Activated naive CD4-positive, alpha-beta T cell treated with anti-CD3 and anti-CD28 coated beads, Interleukin-2, amount 10 ng/mL, durations not matched to agents 7 days and 5 days (primary cell): ENCODE measurements at regions of chr20 and their contacts with region 1.

Region 1: GRCh38 chr20:53750827-53751619 is 157.4 kb upstream of the ZNF217 start:
- DNase-seq: peak; percentile 64
- H3K4me3 Mint-ChIP-seq: peak overlapping the region; percentile 27
- H3K27ac Mint-ChIP-seq: peak overlapping the region; percentile 99
- H3K4me1 Mint-ChIP-seq: peaks cover 80% of the 10 kb centered on the region
- H3K27me3 Mint-ChIP-seq: no peaks in the 10 kb centered on the region

Region 2: DNA sequence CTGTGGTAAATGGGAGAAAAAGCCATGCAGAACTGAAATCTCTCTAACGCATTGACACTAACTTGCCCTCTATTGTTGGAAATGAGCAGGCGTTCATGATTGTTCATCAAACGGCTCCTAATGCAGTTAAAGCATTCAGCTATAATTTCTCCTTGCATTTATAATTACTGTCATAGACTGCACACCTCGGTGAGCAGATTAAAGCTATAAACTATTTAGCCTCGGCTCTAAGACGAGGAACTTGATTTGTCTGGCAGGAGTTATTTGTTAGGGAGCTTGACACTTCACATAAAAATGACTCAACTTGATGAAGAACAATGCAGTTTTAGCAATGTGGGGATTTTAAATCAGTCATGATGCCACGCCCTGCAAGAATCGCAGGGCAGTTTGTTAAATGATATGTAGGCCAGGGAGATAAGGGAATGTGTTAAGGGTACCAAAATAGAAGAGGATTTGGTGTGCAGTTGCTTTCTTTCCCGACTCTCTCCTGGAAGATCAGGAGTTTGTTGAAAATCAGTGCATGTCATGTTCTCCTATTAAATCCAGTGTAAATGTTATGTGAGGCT is 488.6 kb before region 1 on chr20:
- CTCF ChIA-PET with region 1: no interaction called
- DNase-seq: no peak
- H3K4me3 Mint-ChIP-seq: no peak overlapping the region
- H3K27ac Mint-ChIP-seq: no peak overlapping the region
- H3K4me1 Mint-ChIP-seq: no peaks in the 10 kb centered on the region
- H3K27me3 Mint-ChIP-seq: no peaks in the 10 kb centered on the region

Region 3: DNA sequence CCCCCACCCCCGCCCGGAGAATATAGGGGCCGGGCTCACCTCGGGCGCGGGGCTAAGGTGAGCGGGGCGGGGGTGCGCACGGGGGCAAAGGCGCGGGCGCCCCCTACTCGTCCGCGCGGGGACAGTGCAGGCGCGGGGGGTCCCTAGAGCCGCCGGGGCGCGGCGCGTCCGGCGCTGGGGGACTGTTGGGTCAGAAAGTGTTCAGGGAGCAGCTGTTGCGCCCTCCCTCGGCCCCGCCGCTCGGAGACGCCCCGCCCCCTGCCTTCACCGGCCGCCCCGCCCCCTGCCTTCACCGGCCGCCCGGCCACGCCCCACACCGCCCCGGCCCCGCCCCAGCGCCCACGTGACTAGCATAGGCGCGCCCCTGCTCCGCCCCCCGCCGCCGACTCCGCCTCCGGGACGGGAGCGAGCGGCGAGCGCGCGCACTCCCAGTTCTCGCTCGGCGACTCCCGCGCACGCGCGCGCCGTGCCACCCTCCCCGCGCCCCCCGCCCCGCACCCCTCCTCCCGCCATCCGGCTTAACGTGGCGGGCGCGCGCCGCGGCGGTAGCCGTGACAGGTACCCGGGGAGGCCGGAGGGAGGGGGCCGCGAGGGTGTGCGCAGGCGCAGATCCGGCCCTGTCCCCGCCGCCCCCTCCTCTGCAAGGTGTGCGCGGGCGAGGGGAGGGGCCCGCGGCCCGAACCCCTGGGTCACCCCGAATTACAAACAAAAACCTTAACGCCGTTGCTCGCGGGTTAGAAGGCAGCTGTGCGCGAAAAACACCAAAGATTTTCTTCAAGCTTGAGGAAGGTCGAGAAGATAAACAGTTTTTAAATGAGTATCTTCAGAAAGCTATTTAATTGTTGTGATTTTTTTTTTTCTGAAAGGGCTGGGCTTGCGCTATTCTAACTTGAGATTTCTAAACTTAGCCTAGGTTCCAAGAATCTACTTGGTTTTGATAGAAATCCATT is 156.7 kb before region 1 on chr20:
- CTCF ChIA-PET with region 1: no interaction called
- DNase-seq: peak; percentile 96
- H3K4me3 Mint-ChIP-seq: peak overlapping the region; percentile 99
- H3K27ac Mint-ChIP-seq: peak overlapping the region; percentile 99
- H3K4me1 Mint-ChIP-seq: peaks cover 49% of the 10 kb centered on the region
- H3K27me3 Mint-ChIP-seq: no peaks in the 10 kb centered on the region

Region 4: DNA sequence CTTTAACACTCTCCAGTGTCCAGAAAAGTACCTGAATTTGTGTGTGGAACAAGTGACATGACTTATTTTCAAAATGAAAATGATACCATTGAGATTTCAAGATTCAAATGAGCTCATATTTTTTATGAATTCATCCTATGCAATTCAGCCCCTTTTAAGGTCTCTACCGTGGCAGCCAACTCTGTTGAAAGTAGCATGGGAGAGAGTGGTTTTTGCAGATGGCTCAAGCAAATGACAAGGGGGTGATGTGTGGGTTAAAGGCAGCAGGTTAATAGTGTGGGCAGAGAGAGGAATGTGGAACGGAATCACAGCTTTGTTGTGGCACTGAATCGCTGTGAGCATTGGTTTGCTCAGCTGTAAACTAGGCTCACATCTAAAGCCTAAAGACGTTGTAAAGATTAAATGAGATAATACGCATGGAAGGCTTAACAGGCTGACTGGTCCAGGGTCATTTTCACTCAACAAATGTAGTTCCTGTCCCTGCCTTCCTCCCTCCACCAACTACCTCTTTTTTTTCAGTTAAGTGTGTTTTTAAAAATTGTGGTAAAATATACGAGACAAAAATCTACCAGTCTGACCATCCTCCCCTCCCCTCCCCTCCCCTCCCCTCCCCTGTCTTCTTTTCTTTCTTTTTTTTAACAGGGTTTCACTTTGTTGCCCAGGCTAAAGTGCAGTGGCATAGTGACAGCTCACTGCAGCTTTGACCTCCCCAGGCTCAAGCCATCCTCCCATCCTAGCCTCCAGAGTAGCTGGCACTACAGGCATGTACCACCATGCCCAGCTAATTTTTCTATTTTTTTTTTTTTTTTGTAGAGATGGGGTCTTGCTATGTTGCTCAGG is 42.7 kb before region 1 on chr20:
- CTCF ChIA-PET with region 1: interaction called, 15 read pairs
- DNase-seq: peak; percentile 55
- H3K4me3 Mint-ChIP-seq: peak overlapping the region; percentile 29
- H3K27ac Mint-ChIP-seq: peak overlapping the region; percentile 95
- H3K4me1 Mint-ChIP-seq: peaks cover 61% of the 10 kb centered on the region
- H3K27me3 Mint-ChIP-seq: no peaks in the 10 kb centered on the region

Region 5: DNA sequence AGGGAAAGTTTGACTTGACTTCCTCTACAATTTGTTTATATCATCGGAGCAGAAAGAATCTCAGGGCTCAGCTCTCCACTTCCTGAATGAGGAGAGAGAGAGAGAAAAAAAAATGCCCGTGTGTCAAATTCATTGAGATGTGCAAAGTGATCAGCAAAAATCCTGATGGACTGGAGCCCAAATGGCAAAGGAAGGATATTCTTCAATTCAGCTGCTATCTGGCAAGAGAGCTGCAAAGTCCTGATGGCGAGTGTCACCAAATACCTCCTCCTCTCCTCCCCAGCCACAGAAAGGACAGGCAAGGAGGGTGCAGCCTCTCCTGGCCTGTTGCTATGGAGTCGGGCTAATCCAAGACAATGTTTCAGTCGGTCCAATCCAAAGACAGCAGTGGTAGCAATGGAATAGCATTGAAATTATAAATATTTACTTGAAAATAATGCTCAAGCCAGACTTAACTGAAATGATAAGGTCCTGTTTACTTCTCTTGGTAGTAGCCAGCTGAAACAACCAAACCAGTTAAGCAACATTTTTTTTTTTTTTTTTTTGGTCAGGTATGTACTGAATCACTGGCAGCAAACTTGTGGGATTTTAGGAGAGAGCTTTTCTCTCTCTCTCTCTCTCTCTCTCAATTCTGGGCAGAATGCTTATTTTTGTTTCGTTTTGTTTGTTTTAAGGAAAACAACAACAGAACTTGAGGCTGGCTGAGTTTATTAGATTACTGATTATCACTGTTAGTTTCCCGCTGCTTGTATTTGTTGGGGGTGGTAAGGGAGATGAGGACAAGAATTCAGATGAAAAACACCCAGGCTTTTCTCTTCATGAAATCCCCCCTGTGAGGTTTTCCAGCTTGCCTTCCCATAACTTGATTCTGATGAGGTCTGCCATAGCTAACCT is 115.1 kb after region 1 on chr20:
- CTCF ChIA-PET with region 1: interaction called, 11 read pairs
- DNase-seq: no peak
- H3K4me3 Mint-ChIP-seq: peak overlapping the region; percentile 13
- H3K27ac Mint-ChIP-seq: peak overlapping the region; percentile 95
- H3K4me1 Mint-ChIP-seq: peaks cover 65% of the 10 kb centered on the region
- H3K27me3 Mint-ChIP-seq: no peaks in the 10 kb centered on the region

Region 6: GRCh38 chr20:53872561-53873229 is 121.7 kb after region 1 on chr20:
- CTCF ChIA-PET with region 1: interaction called, 16 read pairs
- DNase-seq: peak; percentile 72
- H3K4me3 Mint-ChIP-seq: peak overlapping the region; percentile 76
- H3K27ac Mint-ChIP-seq: peak overlapping the region; percentile 98
- H3K4me1 Mint-ChIP-seq: peaks cover 63% of the 10 kb centered on the region
- H3K27me3 Mint-ChIP-seq: peaks cover 11% of the 10 kb centered on the region